Common myeloid progenitor, CD34-positive (primary cell): ENCODE measurements at regions of chr3 and their contacts with region 1.

Region 1: GRCh38 chr3:30199096-30199759 is 407.2 kb upstream of the TGFBR2 start:
- DNase-seq: peak; percentile 46 to 79 (median 65)
- H3K4me3 ChIP-seq: no peak overlapping the region
- H3K27ac ChIP-seq: no peak overlapping the region
- H3K4me1 ChIP-seq: peaks cover 0 to 13% (median 11%) of the 10 kb centered on the region in 4 experiments
- H3K27me3 ChIP-seq: no peaks in the 10 kb centered on the region

Region 2: GRCh38 chr3:29637068-29637467 is 562.2 kb before region 1 on chr3:
- CTCF ChIA-PET with region 1: no interaction called
- POLR2A ChIA-PET with region 1: no interaction called
- DNase-seq: no peak
- H3K4me3 ChIP-seq: no peak overlapping the region
- H3K27ac ChIP-seq: no peak overlapping the region
- H3K4me1 ChIP-seq: no peaks in the 10 kb centered on the region
- H3K27me3 ChIP-seq: no peaks in the 10 kb centered on the region

Region 3: GRCh38 chr3:30012941-30013543 is 186.2 kb before region 1 on chr3:
- CTCF ChIA-PET with region 1: interaction called, 26 read pairs
- POLR2A ChIA-PET with region 1: no interaction called
- DNase-seq: peak; percentile 57 to 76 (median 63)
- H3K4me3 ChIP-seq: no peak overlapping the region
- H3K27ac ChIP-seq: no peak overlapping the region
- H3K4me1 ChIP-seq: peaks cover 0 to 2% (median 0%) of the 10 kb centered on the region in 4 experiments
- H3K27me3 ChIP-seq: no peaks in the 10 kb centered on the region

Region 4: DNA sequence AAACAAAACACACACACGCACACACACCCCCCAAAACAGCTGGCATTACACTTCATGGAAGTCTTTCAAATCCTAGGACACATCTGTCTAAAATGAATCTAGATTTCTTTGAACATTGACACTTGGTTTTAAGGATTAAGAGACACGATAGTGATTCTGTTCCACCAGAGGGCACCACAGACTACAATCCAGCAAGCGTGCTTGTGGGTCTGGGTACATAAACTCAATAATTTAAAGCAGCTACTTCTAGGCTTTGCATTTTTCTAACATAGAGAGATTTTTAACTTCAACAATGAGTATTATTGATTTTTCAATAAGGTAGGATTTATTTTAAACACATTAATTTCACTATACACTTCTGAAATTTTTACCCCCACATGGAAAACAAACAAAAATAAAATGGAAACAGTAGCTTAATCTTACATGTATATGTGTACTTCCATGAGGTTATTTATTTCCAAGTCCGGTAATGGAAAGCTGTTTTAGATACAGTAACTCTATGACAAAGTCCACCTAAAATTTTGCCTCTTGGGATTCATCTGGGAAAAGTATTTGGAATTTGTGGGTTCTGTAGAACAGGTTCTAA is 156.9 kb before region 1 on chr3:
- CTCF ChIA-PET with region 1: interaction called, 65 read pairs
- POLR2A ChIA-PET with region 1: interaction called, 3 read pairs
- DNase-seq: peak; percentile 74 to 88 (median 82)
- H3K4me3 ChIP-seq: no peak overlapping the region
- H3K27ac ChIP-seq: no peak overlapping the region
- H3K4me1 ChIP-seq: peaks cover 0 to 8% (median 4%) of the 10 kb centered on the region in 4 experiments
- H3K27me3 ChIP-seq: no peaks in the 10 kb centered on the region

Region 5: DNA sequence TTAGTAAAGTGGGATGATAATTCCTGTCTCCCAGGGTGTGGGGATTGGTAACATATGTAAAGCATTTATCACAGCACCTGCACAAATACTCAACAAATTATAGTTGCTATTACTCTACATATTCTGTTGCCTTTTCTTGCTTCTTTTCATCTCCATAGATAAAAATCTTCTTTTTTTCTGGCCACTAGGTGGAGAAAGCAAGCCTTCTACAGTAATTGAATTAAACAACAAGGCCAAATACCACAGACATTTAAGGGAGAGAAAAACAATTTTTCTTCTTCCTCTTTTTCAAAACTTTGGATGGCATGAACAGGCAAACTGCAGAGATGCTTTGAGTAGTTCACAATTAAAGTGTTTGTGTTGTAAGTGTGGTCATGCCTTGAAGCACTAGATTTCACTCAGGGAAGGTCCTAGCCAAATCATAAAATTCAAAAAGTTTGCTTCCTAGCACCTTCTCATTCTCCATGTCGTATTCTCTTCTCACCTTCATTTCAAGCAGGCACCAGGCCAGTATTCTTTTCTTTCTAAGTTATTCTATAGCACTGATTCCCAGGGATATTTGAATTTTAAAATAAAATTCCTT is 86.2 kb before region 1 on chr3:
- CTCF ChIA-PET with region 1: interaction called, 11 read pairs
- POLR2A ChIA-PET with region 1: no interaction called
- DNase-seq: peak; percentile 66 to 85 (median 81)
- H3K4me3 ChIP-seq: no peak overlapping the region
- H3K27ac ChIP-seq: no peak overlapping the region
- H3K4me1 ChIP-seq: peaks cover 0 to 11% (median 3%) of the 10 kb centered on the region in 4 experiments
- H3K27me3 ChIP-seq: no peaks in the 10 kb centered on the region

Region 6: DNA sequence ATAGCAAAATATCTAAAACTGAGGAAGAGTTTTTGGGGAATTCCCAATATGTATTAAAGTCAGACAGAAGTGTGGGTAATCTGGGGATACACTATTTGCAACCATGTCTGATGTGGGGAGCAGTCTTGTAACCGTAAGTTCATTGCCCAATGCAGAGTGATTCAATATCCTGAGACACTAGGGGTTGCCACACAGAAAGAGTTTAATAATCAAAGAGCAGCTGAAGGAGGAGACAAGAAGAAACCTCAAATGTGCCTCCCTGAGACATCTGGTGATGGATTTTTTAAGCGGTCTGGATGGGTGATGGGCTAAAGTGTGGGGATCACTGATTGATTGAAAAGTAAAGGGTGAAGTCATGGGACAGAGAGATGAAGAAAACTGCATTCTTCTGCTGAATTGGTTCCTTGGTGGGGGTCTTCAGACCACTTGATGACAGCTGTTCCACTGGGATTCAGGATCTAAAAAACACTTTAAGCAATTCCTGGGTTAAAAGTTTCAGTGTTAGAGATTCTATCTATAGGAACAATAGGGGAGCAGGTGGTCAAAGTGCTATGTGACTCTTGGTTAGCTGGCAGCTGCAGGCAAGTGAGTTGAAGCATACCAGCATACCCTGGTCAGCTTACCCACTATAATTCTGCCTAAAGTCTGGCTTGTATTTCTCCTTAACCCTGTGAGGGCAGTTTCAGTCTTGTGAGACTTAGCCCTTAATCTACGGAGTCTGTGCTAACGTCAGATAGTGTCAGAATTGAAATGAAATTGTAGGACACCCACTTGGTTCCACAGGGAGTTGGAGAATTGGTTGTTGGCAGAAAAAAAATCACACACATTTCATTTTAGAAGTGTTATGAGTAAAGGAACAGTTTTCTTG is 18.7 kb before region 1 on chr3:
- CTCF ChIA-PET with region 1: interaction called, 10 read pairs
- POLR2A ChIA-PET with region 1: no interaction called
- DNase-seq: no peak
- H3K4me3 ChIP-seq: no peak overlapping the region
- H3K27ac ChIP-seq: no peak overlapping the region
- H3K4me1 ChIP-seq: peaks cover 0 to 2% (median 0%) of the 10 kb centered on the region in 4 experiments
- H3K27me3 ChIP-seq: no peaks in the 10 kb centered on the region